Activated CD4-positive, alpha-beta memory T cell treated with anti-CD3 and anti-CD28 coated beads, Interleukin-2, amount 10 ng/mL, durations not matched to agents 7 days and 5 days (primary cell): ENCODE measurements at regions of chr6 and their contacts with region 1.

Region 1: DNA sequence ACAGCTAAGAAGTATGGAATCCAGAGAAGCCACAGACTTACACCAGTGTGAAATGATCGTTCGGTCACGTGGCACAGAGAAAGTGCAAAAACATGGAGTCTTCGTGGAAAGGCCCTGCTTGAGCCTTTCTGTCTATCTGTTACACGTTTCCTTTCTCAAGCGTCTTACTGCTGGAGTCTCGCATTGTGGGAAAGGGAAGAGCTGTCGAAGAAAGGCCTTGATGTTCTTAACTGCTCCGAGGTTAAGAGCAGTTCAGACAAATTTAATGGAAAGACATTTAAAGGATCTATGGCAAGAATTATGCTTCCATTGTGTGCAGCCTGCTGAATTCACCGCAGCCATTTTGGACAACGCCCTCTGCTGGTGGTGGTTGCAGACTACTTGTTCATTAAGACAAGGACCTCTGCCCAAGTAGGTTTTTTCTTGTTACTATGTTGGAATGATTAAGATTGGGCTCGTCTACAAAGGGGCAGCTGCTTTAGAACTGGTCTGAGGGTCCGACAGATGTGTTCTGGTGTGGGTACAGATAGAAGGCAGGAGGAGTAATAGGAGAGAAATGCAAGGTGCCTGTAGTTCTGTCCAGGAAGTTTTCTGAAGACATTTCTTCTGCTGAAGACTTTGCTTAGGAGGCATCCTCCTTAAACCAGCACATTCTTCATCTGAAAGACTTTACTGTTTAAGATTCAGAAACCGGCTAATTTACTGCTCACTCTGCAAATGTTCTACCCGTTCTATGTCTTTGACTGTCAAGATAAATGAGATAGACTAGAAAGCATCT is 24.7 kb upstream of the CCN6 start:
- DNase-seq: peak; percentile 77
- H3K4me3 Mint-ChIP-seq: no peak overlapping the region
- H3K27ac Mint-ChIP-seq: peak overlapping the region; percentile 77
- H3K4me1 Mint-ChIP-seq: peaks cover 46% of the 10 kb centered on the region
- H3K27me3 Mint-ChIP-seq: no peaks in the 10 kb centered on the region

Region 2: DNA sequence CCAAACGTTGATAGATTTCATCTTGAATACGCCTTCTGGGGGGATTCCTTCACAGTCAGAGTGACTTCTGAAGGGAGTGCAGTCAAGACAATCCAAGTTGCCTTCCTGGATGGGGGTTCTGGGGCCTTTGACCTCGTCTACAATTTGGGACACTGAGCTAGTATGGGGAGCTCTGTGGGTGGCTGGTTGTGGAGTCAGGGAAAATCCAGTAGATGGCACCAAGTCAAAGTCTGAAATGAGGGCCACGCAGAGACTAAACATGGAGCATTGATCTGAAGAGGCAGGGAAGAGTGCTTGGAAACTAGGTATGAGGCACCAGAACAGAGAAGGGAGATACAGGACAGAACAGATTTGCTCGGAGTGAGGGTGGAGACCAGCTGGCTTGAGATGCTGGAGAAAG is 18.9 kb before region 1 on chr6:
- CTCF ChIA-PET with region 1: interaction called, 12 read pairs
- POLR2A ChIA-PET with region 1: no interaction called
- DNase-seq: no peak
- H3K4me3 Mint-ChIP-seq: no peak overlapping the region
- H3K27ac Mint-ChIP-seq: no peak overlapping the region
- H3K4me1 Mint-ChIP-seq: peaks cover 6% of the 10 kb centered on the region
- H3K27me3 Mint-ChIP-seq: no peaks in the 10 kb centered on the region

Region 3: GRCh38 chr6:112018619-112019416 is 10.4 kb before region 1 on chr6:
- CTCF ChIA-PET with region 1: interaction called, 20 read pairs
- POLR2A ChIA-PET with region 1: interaction called, 14 read pairs
- DNase-seq: no peak
- H3K4me3 Mint-ChIP-seq: no peak overlapping the region
- H3K27ac Mint-ChIP-seq: no peak overlapping the region
- H3K4me1 Mint-ChIP-seq: peaks cover 39% of the 10 kb centered on the region
- H3K27me3 Mint-ChIP-seq: no peaks in the 10 kb centered on the region